A549 (cell line): ENCODE measurements at regions of chr17 and their contacts with region 1.

Region 1: DNA sequence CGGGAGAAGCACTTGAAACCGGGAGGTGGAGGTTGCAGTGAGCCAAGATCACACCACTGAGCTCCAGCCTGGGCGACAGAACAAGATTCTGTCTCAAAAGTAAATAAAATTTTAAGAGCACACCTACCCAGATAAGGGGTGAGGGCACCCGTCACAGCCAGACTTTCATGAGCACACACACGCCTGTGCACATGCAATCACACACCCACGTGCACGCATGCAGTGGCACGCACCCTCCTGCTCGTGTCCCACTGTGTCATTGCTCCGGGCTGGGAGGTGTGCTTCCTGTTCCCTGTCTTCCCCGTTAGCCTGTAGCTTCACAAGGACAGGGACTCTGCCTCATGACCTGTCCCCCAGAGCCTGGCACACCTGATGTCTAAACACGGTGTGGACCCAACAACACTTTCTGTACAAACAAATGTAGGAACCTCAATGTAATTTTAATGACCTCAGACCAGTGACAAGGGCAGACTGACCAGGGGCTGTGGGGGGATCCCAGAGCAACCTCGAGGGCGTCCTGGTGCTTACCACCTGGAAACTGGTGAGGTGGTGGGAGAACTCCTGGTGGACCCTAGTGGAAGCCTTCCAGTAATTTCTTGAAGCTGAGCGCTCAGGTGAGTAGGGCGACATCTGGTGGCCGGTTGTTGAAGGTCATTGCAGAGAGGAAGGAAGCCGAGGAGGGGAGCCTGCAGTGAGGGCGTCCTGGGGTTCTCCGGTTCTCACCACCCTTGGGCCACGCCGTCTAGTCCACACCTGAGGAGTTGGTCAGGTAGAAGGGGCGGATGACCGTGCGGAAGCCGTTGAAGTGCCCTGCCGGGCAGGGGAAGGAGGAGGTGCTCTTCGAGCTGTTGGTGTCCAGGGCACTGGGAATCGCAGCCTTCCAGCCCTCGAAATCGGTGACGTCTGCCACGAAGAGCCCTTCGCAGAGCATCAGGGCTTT is 8.6 kb downstream of the LGALS3BP start:
- DNase-seq: peak; percentile 83 to 91
- ATAC-seq: peak; percentile 45 to 81
- H3K4me3 ChIP-seq: no peak overlapping the region
- H3K27ac ChIP-seq: peak overlapping the region; percentile 31 to 76
- H3K4me1 ChIP-seq: peaks cover 20% of the 10 kb centered on the region; the same call in 2 of the 3 replicates
- CTCF ChIP-seq: peak; percentile 98
- EP300 ChIP-seq: no peak
- POLR2A ChIP-seq: no peak
- RAD21 ChIP-seq: peak; percentile 96

Region 2: DNA sequence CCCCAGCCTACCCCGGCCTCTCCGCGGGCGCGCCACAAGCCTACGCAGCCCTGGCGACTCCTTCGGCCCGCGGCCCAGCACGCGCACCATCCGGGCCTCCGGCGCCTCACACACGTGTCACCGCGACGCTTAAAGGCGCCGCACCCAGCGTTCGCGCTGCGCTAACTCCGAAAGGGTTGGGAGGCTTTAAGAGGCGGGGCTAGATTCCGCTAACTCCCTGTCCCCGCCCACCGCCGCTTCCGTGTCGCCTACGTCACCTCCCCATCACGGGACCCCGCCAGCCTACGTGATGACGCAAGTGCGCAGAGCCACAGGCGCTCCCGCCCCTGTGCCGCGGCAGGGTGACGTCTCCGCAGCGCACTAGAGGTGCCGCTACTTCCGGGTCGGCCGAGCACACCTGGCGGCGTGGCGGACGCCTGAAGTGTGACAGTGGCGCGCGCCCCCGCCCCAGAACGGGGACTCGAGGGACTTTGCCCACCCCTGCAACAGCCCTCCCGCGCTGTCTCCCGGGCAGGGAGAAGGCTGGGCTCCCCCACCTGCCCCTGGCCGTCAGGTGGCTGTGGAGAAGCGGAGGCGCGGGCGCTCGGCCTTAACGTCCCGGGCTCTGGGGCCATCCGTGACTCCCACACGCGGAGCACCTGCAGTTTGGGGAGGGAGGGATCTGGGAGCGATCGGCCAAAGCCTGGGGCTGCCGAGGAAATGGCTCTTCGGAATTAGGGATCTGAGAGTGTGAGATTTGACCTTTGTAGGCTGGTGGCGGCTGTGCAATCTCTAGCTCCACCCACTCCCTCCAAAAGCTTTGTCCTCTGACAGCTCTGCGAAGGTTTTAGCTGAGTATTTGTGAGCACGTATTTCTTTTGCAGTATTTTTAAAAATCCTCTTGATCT is 130.1 kb before region 1 on chr17 and contains the start of gene USP36:
- CTCF ChIA-PET with region 1: interaction called, 12 read pairs
- POLR2A ChIA-PET with region 1: interaction called, 4 read pairs
- DNase-seq: peak; percentile 98 to 100
- ATAC-seq: peak; percentile 88 to 93
- H3K4me3 ChIP-seq: peak within 1 kb of the TSS; percentile 99
- H3K27ac ChIP-seq: peak within 1 kb of the TSS; percentile 94
- H3K4me1 ChIP-seq: peaks cover 24% of the 10 kb centered on the region
- CTCF ChIP-seq: no peak
- EP300 ChIP-seq: peak in 1 of 2 experiments; percentile 44; a peak in 1 of 5 replicates
- POLR2A ChIP-seq: peak; percentile 84
- RAD21 ChIP-seq: no peak; a peak in 1 of 5 replicates
- polyA plus RNA-seq, gene USP36: 49.0 and 59.0 TPM in 2 replicates

Region 3: DNA sequence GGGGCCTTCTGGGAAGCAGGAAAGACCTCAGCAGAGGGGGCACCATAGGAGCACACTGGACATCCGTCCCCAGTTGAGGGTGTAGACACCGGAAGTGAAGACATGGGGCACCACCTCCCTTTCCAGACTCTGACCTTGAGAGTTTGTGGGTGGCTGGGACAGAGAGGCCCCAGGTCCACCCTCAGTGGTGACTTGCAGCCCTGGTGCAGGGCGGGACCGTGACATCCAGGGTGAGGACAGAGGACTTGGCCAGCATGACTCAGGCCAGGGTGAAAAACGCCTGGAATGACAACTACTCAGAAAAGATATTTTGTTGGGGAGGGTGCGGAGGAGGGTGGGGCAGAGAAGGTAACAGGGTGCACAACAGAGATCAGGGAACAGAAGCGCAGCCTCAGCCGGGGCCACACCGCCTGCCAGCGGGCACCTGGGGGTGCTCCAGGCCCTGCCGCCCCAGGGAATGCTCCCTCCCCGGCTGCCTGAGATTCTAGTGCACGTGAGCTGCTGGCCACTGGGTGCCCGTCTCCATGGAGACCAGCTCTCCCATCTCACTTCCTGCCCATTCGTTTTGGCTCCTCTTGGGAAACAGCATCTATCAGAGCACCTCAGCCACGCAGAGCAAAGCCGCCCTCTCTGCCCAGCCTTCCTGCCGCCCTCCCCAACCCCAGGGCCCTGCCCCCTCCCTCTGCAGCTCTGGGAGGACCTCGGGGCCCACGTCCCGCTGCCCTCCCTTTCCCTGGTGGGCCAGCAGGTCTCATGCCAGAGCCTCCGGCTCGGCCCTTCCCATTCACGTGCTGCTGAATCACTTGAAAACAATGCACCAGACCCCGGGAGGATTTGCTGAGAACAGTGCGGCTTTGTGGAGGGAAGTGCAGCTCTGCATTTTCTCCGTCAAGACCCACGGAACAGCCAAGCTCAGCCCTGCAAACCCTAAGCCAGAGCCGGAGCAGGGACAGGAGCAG is 87.7 kb before region 1 on chr17:
- CTCF ChIA-PET with region 1: interaction called, 321 read pairs
- POLR2A ChIA-PET with region 1: no interaction called
- DNase-seq: peak; percentile 94 to 98
- ATAC-seq: peak; percentile 74 to 85
- H3K4me3 ChIP-seq: peak overlapping the region; percentile 14
- H3K27ac ChIP-seq: peak overlapping the region; percentile 86 to 91
- H3K4me1 ChIP-seq: peaks cover 47% of the 10 kb centered on the region
- CTCF ChIP-seq: 0 out of 3 replicates have a peak, but pooled peaks have one; percentile 5
- EP300 ChIP-seq: peak in 1 of 2 experiments; percentile 43; a peak in 1 of 5 replicates
- POLR2A ChIP-seq: no peak; the same call in 1 of the 2 replicates
- RAD21 ChIP-seq: peak; percentile 3 to 36; a peak in 2 of 5 replicates

Region 4: GRCh38 chr17:78903101-78903779 is 67.9 kb before region 1 on chr17 and contains the start of gene CEP295NL:
- CTCF ChIA-PET with region 1: interaction called, 40 read pairs
- POLR2A ChIA-PET with region 1: no interaction called
- DNase-seq: peak; percentile 57 to 66
- ATAC-seq: peak; percentile 47 to 78
- H3K4me3 ChIP-seq: no peak within 1 kb of the TSS
- H3K27ac ChIP-seq: peak within 1 kb of the TSS in 1 of 2 experiments; percentile 2; a peak in 1 of 6 replicates
- H3K4me1 ChIP-seq: peaks cover 26% of the 10 kb centered on the region
- CTCF ChIP-seq: no peak
- EP300 ChIP-seq: no peak
- POLR2A ChIP-seq: no peak
- RAD21 ChIP-seq: no peak
- polyA plus RNA-seq, gene CEP295NL: 0.09 and 0.10 TPM in 2 replicates

Region 5: GRCh38 chr17:78925234-78925633 is 45.9 kb before region 1 on chr17 and contains the start of gene TIMP2:
- CTCF ChIA-PET with region 1: interaction called, 15 read pairs
- POLR2A ChIA-PET with region 1: no interaction called
- DNase-seq: peak; percentile 84 to 87
- ATAC-seq: peak; percentile 72 to 76
- H3K4me3 ChIP-seq: peak within 1 kb of the TSS; percentile 86
- H3K27ac ChIP-seq: peak within 1 kb of the TSS; percentile 97 to 99
- H3K4me1 ChIP-seq: peaks cover 46% of the 10 kb centered on the region
- CTCF ChIP-seq: no peak
- EP300 ChIP-seq: no peak
- POLR2A ChIP-seq: peak; percentile 77
- RAD21 ChIP-seq: peak in 1 of 2 experiments; percentile 34; a peak in 2 of 5 replicates
- polyA plus RNA-seq, gene TIMP2: 68.1 and 77.8 TPM in 2 replicates

Region 6: DNA sequence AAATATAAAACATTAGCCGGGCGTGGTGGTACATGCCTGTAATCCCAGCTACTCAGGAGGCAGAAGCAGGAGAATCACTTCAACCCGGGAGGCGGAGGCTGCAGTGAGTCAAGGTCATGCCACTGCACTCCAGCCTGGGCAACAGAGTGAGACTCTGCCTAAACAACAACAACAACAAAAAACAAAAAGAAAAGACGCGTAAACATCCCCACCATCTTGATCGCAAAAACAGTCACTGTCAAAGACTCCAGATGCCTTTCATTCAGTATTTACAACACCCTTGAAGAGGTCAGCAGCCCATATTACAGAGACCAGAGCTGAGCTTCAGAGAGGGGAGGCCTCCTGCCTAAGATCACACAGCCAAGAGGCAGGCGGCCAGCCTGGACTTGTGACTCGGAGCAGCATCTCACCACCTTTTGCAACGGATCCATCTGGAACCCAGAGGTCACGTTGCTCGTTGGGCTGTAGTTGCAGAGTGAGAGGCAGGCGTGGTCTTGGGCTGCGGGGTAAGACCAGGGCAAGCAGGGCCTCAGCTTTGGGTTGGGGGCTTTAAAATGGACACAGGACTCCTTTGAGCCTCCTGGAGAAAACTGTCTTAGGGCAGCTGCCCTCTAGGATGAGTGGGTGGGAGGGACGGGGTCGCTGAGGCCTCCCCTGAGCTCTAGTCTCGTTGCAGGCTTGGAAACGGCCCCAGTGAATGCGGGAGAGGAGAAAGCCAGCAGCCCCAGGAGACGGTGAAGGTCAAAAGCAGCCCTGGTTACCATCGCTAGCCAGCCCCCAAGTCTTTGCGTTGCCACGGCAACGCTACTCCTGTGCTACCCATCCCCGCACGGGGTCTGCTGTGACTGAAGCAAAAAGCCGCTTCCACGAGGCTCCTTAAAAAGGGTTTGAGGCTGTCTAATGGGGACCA is 17.5 kb before region 1 on chr17:
- CTCF ChIA-PET with region 1: interaction called, 103 read pairs
- POLR2A ChIA-PET with region 1: no interaction called
- DNase-seq: no peak
- ATAC-seq: no peak
- H3K4me3 ChIP-seq: no peak overlapping the region
- H3K27ac ChIP-seq: peak overlapping the region in 1 of 2 experiments; percentile 4; a peak in 1 of 6 replicates
- H3K4me1 ChIP-seq: peaks cover 20% of the 10 kb centered on the region
- CTCF ChIP-seq: no peak
- EP300 ChIP-seq: no peak
- POLR2A ChIP-seq: no peak
- RAD21 ChIP-seq: no peak

Region 7: GRCh38 chr17:79012563-79013134 is 41.5 kb after region 1 on chr17:
- CTCF ChIA-PET with region 1: no interaction called
- POLR2A ChIA-PET with region 1: no interaction called
- DNase-seq: no peak
- ATAC-seq: no peak
- H3K4me3 ChIP-seq: no peak overlapping the region
- H3K27ac ChIP-seq: no peak overlapping the region
- H3K4me1 ChIP-seq: peaks cover 17% of the 10 kb centered on the region
- CTCF ChIP-seq: no peak
- EP300 ChIP-seq: no peak
- POLR2A ChIP-seq: no peak
- RAD21 ChIP-seq: no peak